ENCODE measurements at regions of chr4 and their contacts with region 1.

Region 1: DNA sequence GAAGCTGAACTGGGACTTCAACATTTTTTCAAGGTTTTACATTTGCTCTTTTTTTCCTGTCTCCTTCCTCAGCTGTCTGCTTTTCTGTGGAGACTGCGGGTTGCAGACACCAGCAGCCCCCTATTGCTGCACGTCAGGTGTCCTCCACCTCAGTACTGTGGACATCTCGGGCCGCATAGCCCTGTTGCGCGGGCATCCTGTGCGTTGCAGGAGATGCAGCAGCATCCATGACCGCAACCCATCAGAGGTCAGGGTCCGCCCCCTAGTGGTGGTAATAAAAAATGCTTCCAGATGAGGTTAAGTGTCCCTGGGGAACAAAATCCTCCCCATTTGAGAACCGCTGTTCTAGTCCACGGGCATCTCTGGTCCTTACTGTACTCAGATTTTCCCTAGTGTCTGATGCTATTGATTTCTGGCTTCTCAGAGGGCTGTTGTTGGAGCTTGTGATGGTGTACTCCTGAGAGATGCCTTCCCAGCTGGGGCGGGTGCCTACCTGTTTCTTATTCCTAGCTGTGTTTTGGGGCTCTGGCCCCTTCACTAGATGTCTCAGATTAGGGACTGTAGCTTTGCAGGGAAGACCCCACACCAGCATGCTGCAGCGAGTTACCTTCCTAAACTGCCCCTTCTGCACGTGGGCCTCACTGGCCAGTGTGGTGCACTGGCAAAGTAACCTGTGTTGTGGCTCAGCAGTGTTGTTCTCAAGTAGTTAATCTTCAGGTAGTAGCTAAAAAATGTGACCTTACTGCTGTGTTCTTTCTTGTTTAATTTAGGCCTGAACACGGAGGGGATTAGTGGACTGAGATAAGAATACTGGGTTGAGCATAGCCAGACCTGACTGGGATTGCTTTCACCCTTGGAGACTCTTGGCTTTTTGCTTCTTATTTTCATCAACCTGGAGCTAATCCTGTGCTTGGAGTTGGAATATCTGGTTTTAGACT is 28.2 kb downstream of the NSD2 start:
- DNase-seq: peak; percentile 75 to 87 (median 86)
- H3K4me3 ChIP-seq: peak overlapping the region in 2 of 7 experiments; percentile 23 to 42
- H3K27ac ChIP-seq: no peak overlapping the region
- H3K4me1 ChIP-seq: peaks cover 0 to 3% (median 3%) of the 10 kb centered on the region in 4 experiments
- H3K27me3 ChIP-seq: no peaks in the 10 kb centered on the region

Region 2: DNA sequence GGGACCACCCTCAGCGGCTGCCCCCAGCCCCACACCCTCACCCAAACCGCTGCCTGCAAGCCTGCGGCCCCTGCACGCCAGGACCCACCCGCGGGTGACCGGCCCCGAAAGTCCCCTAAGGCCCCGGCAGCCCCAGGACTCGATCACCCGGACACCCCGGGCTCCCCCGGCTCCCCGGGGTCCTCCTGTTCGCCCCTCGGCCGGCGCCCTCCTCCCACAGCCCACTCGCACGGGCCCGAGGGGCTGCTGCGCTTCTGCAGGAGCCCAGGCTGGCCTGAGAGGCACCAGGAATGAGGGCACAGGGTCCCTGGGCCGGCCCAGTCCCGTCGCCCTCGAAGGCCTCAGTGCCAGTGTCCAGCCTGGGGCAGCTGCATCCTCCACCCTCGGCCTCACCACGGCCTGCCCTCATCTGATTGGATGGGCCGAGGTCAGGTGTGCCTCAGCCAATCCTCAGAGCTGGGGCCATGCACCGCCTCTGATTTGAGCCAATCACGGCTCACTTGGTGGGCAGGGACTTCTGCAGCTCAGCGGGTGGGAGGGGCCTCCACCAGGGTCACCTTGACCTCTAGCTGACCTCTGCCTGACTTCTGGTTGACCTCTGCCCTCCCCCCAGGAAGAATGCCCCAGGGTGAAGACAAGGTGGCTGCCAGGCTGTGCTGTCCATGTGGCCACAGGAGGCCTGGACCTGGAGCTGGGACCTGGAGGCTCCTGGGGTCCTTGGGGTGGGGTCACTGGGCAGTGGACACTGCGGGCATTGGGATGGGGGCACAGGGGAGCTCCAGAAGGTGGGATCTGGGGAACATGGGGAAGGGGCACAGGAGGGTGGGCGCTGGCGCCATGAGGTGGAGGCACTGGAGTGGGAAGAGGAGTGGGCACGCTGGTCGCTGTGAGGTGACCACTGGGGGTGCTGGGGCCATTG is 395.6 kb before region 1 on chr4:
- CTCF ChIA-PET with region 1: no interaction called
- POLR2A ChIA-PET with region 1: no interaction called
- DNase-seq: no peak
- H3K4me3 ChIP-seq: no peak overlapping the region
- H3K27ac ChIP-seq: no peak overlapping the region
- H3K4me1 ChIP-seq: no peaks in the 10 kb centered on the region
- H3K27me3 ChIP-seq: peaks cover 0 to 29% (median 2%) of the 10 kb centered on the region in 5 experiments

Region 3: DNA sequence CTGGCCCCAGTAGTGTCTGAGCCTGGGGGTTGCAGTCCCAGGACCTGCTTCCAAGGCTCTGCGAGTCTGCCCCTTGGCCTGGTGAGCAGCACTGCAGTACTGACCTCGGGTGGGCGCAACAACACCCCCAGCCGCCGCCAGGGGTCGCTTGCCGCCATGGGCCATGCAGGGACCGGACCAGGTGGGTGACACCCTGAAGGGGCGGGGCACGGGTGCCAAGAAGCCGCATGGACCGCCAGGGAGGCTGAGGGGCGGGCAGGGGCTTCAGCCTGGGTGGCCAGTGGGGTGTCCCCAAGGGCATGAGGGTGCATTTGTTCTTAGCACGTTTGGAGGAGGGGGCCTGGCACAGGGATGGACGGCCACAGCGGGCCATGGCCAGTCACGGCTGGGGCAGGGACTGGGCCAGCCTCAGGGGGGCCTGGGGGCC is 153.1 kb before region 1 on chr4:
- CTCF ChIA-PET with region 1: interaction called, 51 read pairs
- POLR2A ChIA-PET with region 1: no interaction called
- DNase-seq: peak; percentile 86 to 94 (median 92)
- H3K4me3 ChIP-seq: no peak overlapping the region
- H3K27ac ChIP-seq: no peak overlapping the region
- H3K4me1 ChIP-seq: peaks cover 0 to 20% (median 14%) of the 10 kb centered on the region in 4 experiments
- H3K27me3 ChIP-seq: no peaks in the 10 kb centered on the region

Region 4: GRCh38 chr4:1834047-1834775 is 65.2 kb before region 1 on chr4:
- CTCF ChIA-PET with region 1: interaction called, 29 read pairs
- POLR2A ChIA-PET with region 1: no interaction called
- DNase-seq: peak in 1 of 3 donors; percentile 7
- H3K4me3 ChIP-seq: no peak overlapping the region
- H3K27ac ChIP-seq: no peak overlapping the region
- H3K4me1 ChIP-seq: peaks cover 0 to 6% (median 3%) of the 10 kb centered on the region in 4 experiments
- H3K27me3 ChIP-seq: no peaks in the 10 kb centered on the region

Region 5: GRCh38 chr4:1862055-1862926 is 37.1 kb before region 1 on chr4:
- CTCF ChIA-PET with region 1: interaction called, 39 read pairs
- POLR2A ChIA-PET with region 1: no interaction called
- DNase-seq: peak in 2 of 3 donors; percentile 37 to 52
- H3K4me3 ChIP-seq: peak overlapping the region; percentile 32 to 77 (median 48)
- H3K27ac ChIP-seq: peak overlapping the region in 1 of 2 experiments; percentile 25
- H3K4me1 ChIP-seq: peaks cover 0 to 28% (median 23%) of the 10 kb centered on the region in 4 experiments
- H3K27me3 ChIP-seq: no peaks in the 10 kb centered on the region

Region 6: GRCh38 chr4:1879485-1879884 is 19.9 kb before region 1 on chr4:
- CTCF ChIA-PET with region 1: interaction called, 89 read pairs
- POLR2A ChIA-PET with region 1: interaction called, 3 read pairs
- DNase-seq: no peak
- H3K4me3 ChIP-seq: no peak overlapping the region
- H3K27ac ChIP-seq: no peak overlapping the region
- H3K4me1 ChIP-seq: peaks cover 2 to 43% (median 13%) of the 10 kb centered on the region in 4 experiments
- H3K27me3 ChIP-seq: no peaks in the 10 kb centered on the region

Region 7: DNA sequence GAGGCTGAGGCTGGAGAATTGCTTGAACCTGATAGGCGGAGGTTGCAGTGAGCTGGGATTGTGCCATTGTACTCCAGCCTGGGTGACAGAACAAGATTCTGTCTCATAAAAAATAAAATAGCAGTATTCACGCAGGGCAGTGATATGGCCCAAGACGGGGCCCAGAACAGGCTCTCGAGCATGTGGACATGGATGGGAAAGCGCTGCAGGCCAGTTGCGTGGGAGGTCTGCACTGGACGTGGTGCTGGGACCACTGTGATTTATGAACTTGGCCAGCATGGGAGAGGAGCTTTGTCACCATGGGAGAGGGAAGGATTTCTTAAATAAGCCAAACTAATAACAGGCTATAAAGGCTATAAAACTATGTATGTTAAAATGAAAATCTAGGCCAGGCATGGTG is 23.4 kb after region 1 on chr4:
- CTCF ChIA-PET with region 1: interaction called, 11 read pairs
- POLR2A ChIA-PET with region 1: no interaction called
- DNase-seq: no peak
- H3K4me3 ChIP-seq: no peak overlapping the region
- H3K27ac ChIP-seq: no peak overlapping the region
- H3K4me1 ChIP-seq: no peaks in the 10 kb centered on the region
- H3K27me3 ChIP-seq: no peaks in the 10 kb centered on the region

Region 8: DNA sequence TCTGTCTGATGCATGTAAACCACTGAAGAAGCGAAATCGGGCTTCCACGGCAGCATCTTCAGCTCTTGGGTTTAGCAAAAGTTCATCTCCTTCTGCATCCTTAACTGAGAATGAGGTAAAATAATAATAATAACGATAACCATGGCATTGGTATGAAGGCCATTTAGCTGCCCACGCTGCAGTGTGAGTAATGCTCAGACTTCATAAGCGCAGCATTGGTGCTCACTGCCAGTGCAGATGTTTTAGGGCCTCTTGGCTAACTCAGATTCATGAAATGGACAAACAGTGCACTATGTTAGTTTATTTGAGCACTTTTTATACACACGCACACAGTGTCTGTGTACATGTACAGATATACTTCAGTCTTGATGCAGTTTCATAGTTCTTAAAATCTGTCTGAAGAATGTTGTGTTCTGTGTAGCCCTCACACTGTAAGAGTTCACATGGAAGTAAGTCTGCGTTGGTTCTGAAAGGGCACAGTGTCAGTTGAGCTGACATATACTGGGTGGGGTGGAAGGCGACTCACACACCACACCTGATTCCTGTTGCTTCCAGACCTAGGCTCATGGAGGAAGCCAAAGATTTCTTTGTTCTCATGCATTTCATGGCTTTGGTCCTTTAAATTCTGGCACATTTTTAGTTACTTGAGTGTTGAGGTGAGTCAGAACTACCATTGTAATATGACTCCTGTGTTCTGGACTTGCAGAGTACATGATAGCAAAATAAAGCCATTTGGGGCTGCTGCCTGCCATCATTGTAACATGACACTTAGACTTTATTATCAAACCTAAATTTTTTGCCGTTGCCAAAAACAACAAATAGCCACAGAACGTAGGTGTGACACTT is 40.5 kb after region 1 on chr4:
- CTCF ChIA-PET with region 1: no interaction called
- POLR2A ChIA-PET with region 1: no interaction called
- DNase-seq: no peak
- H3K4me3 ChIP-seq: no peak overlapping the region
- H3K27ac ChIP-seq: no peak overlapping the region
- H3K4me1 ChIP-seq: no peaks in the 10 kb centered on the region
- H3K27me3 ChIP-seq: no peaks in the 10 kb centered on the region

Region 9: DNA sequence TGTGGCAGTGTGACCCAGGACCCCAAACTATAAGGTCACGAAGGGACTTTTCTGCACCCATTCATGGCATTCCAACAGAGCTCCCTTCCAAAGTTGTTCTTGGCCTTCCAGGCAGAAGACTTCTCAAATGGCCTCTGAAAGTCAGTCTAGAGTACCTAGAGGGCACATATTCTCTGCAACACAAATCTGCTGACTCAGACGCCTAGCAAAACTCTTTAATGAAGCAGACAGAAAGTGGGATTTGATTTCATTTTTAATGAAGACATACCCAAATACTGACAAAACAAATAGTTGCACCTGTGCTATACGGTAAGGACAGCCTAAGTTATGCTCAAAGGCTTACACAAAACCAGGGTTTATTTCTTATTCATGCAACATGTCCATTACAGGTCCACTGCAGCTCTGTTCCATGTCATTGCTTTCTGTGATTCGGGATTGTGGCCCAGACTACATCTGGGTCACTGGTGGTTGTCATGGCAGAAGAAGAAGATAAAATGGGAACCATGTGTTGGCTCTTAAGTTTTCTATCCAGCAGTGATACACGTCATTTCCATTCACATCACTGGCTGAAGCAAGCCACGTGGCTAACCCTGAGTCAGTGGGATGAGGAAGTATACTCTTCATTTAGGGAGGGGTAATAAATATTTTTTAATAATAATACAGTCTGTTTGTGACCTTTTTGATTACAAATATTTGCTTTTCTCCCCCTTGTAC is 217.4 kb after region 1 on chr4:
- CTCF ChIA-PET with region 1: no interaction called
- POLR2A ChIA-PET with region 1: no interaction called
- DNase-seq: no peak
- H3K4me3 ChIP-seq: no peak overlapping the region
- H3K27ac ChIP-seq: no peak overlapping the region
- H3K4me1 ChIP-seq: no peaks in the 10 kb centered on the region
- H3K27me3 ChIP-seq: peaks cover 0 to 5% (median 0%) of the 10 kb centered on the region in 5 experiments

Region 10: GRCh38 chr4:2177443-2178093 is 278.1 kb after region 1 on chr4:
- CTCF ChIA-PET with region 1: no interaction called
- POLR2A ChIA-PET with region 1: no interaction called
- DNase-seq: no peak
- H3K4me3 ChIP-seq: no peak overlapping the region
- H3K27ac ChIP-seq: no peak overlapping the region
- H3K4me1 ChIP-seq: peaks cover 0 to 2% (median under 1%) of the 10 kb centered on the region in 4 experiments
- H3K27me3 ChIP-seq: peaks cover 0 to 2% (median 0%) of the 10 kb centered on the region in 5 experiments

Measured in common myeloid progenitor, CD34-positive (primary cell).